Naive thymus-derived CD4-positive, alpha-beta T cell (primary cell): ENCODE measurements at regions of chr2 and their contacts with region 1.

Region 1: DNA sequence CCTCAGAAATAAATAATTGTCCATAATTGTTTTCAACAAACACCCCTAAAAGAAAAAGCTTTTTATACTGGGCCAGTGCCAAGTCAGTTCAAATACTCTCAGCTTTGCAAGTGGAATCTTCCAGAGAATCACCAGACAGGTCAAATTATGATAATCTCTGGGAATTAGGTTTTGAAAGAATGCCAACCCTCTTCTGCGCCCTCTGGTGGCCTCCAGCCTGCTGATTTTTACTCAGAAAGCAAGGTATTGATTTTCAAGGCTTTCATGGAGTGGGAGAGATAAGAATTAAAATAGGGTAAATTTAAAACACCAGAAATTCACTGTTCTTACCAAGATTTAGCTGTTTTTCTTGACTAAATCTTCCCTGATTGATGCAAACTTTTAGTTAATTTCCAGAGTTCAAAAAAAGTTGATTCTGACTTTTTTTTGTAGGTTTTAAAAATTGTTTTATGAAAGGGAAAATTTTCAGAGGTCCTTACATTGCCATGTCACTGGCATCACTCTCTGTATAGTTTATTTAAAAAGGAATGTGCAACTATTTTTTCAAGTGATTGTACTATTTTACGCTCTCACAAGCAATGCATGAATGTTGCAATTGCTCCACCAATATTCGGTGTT is 282.9 kb upstream of the TNP1 start:
- DNase-seq: peak in 1 of 9 donors; percentile 27
- ATAC-seq: no peak
- H3K4me3 ChIP-seq: no peak overlapping the region
- H3K4me3 Mint-ChIP-seq: no peak overlapping the region
- H3K27ac ChIP-seq: no peak overlapping the region
- H3K27ac Mint-ChIP-seq: no peak overlapping the region
- H3K4me1 ChIP-seq: no peaks in the 10 kb centered on the region
- H3K4me1 Mint-ChIP-seq: no peaks in the 10 kb centered on the region
- H3K27me3 ChIP-seq: no peaks in the 10 kb centered on the region
- H3K27me3 Mint-ChIP-seq: peaks cover 0 to 29% (median 14%) of the 10 kb centered on the region in 5 donors

Region 2: DNA sequence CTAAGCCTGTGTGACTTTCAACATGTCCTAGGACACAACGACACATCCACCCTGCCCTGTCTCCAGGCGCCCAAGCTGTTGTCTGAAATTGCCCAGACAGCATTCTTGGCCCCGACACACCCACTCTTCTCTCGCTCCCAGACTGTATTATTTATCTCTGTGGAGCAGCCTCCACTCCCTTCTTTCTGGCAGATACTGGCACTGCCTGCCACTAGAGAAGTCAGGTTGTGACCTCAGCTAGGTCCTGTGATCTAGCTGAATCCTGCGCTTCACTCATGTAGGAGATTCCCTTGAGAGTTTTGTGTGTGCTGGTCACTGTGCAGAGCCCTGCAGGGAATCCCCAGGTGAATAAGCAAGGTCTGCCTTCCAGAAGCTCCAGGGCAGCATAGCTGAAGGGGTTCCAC is 205.8 kb before region 1 on chr2:
- CTCF ChIA-PET with region 1: no interaction called
- POLR2A ChIA-PET with region 1: no interaction called
- intact Hi-C with region 1: no loop called
- DNase-seq: no peak
- ATAC-seq: no peak
- H3K4me3 ChIP-seq: no peak overlapping the region
- H3K4me3 Mint-ChIP-seq: no peak overlapping the region
- H3K27ac ChIP-seq: no peak overlapping the region
- H3K27ac Mint-ChIP-seq: no peak overlapping the region
- H3K4me1 ChIP-seq: no peaks in the 10 kb centered on the region
- H3K4me1 Mint-ChIP-seq: no peaks in the 10 kb centered on the region
- H3K27me3 ChIP-seq: no peaks in the 10 kb centered on the region
- H3K27me3 Mint-ChIP-seq: peaks cover 3 to 12% (median 6%) of the 10 kb centered on the region in 5 donors

Region 3: DNA sequence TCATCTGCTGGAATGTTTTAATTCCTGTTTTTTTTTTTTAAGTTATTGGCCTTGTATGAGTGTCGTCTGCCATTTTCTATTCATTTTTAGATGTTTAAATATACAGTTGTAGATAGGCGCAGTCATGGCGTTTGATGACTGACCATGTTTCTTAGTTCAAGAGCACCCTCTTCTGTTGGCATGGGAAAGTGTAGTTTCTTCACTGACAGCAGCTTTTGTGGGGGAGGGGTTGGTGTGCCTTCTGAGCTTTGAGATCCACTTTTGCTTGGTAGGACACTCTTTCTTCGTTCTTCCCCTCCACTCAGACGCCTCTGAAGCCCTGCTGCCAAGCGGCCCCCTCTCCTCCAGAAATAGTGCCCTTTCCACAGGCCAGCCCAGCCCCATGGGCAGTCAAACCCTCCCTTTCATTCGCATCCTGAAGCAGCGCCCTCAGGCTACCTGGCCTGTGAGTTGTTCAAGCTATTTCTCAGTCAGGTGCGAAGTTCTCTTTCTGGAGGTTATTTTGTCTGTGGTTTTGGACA is 368.1 kb after region 1 on chr2:
- CTCF ChIA-PET with region 1: no interaction called
- POLR2A ChIA-PET with region 1: no interaction called
- intact Hi-C with region 1: loop called in 1 of 2 experiments (anchors 10 kb)
- DNase-seq: peak in 8 of 9 donors; percentile 11 to 59 (median 40)
- ATAC-seq: peak; percentile 82
- H3K4me3 ChIP-seq: no peak overlapping the region
- H3K4me3 Mint-ChIP-seq: peak overlapping the region in 2 of 10 donors; percentile 14 to 20
- H3K27ac ChIP-seq: no peak overlapping the region
- H3K27ac Mint-ChIP-seq: no peak overlapping the region
- H3K4me1 ChIP-seq: no peaks in the 10 kb centered on the region
- H3K4me1 Mint-ChIP-seq: peaks cover 0 to 13% (median 7%) of the 10 kb centered on the region in 7 donors
- H3K27me3 ChIP-seq: no peaks in the 10 kb centered on the region
- H3K27me3 Mint-ChIP-seq: peaks cover 4 to 19% (median 7%) of the 10 kb centered on the region in 5 donors